Activated naive CD4-positive, alpha-beta T cell treated with anti-CD3 and anti-CD28 coated beads for 36 hours (primary cell): ENCODE measurements at regions of chr10 and their contacts with region 1.

Region 1: DNA sequence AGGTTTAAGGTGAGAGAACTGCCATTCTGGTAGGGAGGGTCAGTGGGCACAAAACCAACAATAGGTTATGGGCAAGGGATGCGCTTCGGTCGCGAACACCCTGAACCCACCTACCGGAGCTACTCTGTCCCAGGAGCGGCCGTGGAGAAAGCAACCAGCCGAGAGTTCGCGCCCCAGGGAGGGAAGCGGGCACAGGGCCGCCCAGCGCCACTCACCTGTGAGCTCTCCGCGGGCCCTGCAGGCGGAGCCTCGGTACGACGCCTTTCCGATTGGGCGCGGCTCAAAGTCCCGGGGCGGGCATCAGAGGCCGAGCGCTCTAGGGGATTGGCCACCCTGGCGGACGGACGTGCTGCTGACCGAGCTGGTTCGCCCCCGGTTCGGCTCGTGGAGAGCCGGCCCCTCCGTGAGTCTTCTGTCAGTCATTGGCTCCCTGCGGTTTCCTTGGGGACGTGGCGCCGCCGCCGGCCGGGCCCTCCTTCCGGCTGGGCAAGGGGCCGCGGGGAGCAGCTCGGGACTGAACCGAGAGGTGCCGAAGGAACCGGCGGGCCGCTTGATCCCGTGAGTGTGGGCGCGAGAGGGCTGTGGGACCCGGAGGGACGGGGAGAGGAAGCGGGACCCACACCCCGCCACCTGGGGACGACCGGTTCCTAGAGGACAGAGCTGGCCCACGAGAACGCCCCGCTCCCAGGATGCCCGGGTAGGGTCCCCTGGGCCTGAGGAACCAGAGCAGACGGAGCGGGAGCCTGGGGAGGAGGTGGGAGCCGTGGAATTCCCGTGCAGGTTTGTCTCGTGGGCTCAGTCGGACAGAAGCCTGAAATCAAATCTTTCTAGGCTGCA is at the start of gene ENTPD7:
- DNase-seq: peak; percentile 94
- H3K4me3 Mint-ChIP-seq: peak within 1 kb of the TSS; percentile 95
- H3K27ac Mint-ChIP-seq: peak within 1 kb of the TSS; percentile 83
- H3K4me1 Mint-ChIP-seq: peaks cover 21% of the 10 kb centered on the region
- H3K27me3 Mint-ChIP-seq: peaks cover 13% of the 10 kb centered on the region
- total RNA-seq, gene ENTPD7: 1.2 to 1.4 TPM

Region 2: GRCh38 chr10:99430451-99431189 is 228.6 kb before region 1 on chr10 and contains the start of gene GOT1:
- CTCF ChIA-PET with region 1: no interaction called
- intact Hi-C with region 1: loop called (anchors 1 kb)
- DNase-seq: peak; percentile 99
- H3K4me3 Mint-ChIP-seq: peak within 1 kb of the TSS; percentile 95
- H3K27ac Mint-ChIP-seq: peak within 1 kb of the TSS; percentile 90
- H3K4me1 Mint-ChIP-seq: peaks cover 38% of the 10 kb centered on the region
- H3K27me3 Mint-ChIP-seq: no peaks in the 10 kb centered on the region
- total RNA-seq, gene GOT1: 62.6 to 67.3 TPM

Region 3: GRCh38 chr10:99595770-99596465 is 63.3 kb before region 1 on chr10:
- CTCF ChIA-PET with region 1: no interaction called
- intact Hi-C with region 1: no loop called
- DNase-seq: no peak
- H3K4me3 Mint-ChIP-seq: no peak overlapping the region
- H3K27ac Mint-ChIP-seq: no peak overlapping the region
- H3K4me1 Mint-ChIP-seq: no peaks in the 10 kb centered on the region
- H3K27me3 Mint-ChIP-seq: no peaks in the 10 kb centered on the region

Region 4: DNA sequence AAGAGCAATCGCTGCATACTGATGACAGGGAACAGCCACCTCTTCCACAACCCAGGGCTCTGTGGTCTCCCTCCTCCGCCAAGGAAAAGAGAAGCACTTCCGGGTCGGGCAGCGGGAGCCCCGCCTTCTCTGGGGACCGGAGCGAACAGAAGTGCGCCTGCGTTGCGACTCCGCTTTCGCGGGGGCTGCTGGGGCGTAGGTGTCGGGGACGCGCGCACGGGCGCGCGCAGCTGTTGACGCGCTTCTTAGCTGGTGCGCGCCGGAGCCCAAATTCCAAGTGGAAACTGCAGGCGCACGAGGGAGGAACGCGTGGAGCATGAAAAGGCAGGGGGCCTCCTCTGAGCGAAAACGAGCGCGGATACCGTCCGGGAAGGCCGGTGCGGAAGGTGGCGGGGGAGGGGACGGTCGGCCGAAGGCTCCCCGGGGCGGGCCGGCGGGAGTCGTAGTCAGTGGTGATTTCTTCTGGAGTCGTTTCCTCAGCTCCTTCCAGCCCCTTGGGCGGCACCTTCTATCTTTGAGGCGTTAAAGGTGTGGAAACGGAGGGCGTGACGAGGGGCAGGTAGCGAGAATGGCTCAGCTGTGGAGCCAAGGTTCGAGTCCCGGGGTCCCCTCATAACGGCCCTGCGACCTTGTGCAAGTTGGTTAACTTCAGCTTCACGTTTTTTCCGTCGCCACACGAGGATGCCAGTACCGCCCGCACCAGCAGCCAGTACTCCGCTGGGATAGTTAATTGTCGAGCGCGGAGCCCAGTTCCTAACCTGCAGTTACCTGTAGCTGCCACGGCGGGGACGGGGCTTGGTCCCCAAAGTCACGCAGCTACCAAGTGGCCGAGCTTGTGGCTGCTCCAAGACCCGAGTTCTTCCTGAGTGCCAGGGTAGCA is 73.0 kb after region 1 on chr10 and contains the starts of genes COX15 and CUTC:
- CTCF ChIA-PET with region 1: no interaction called
- intact Hi-C with region 1: loop called (anchors 1 kb)
- DNase-seq: peak; percentile 96
- H3K4me3 Mint-ChIP-seq: peak within 1 kb of the TSS; percentile 99
- H3K27ac Mint-ChIP-seq: peak within 1 kb of the TSS; percentile 96
- H3K4me1 Mint-ChIP-seq: peaks cover 32% of the 10 kb centered on the region
- H3K27me3 Mint-ChIP-seq: no peaks in the 10 kb centered on the region
- total RNA-seq, gene COX15: 36.3 to 38.8 TPM
- total RNA-seq, gene CUTC: 21.6 to 21.9 TPM

Region 5: GRCh38 chr10:100229819-100230422 is 570.7 kb after region 1 on chr10:
- CTCF ChIA-PET with region 1: no interaction called
- intact Hi-C with region 1: loop called (anchors 1 kb)
- DNase-seq: no peak
- H3K4me3 Mint-ChIP-seq: peak overlapping the region; percentile 91
- H3K27ac Mint-ChIP-seq: peak overlapping the region; percentile 90
- H3K4me1 Mint-ChIP-seq: peaks cover 31% of the 10 kb centered on the region
- H3K27me3 Mint-ChIP-seq: no peaks in the 10 kb centered on the region